ENCODE measurements at regions of chr19 and their contacts with region 1.

Region 1: GRCh38 chr19:6279931-6280591 is at the start of gene MLLT1:
- DNase-seq: peak; percentile 88 to 98 (median 93)
- ATAC-seq: peak; percentile 85
- H3K4me3 ChIP-seq: peak within 1 kb of the TSS; percentile 60 to 61
- H3K4me3 Mint-ChIP-seq: peak within 1 kb of the TSS; percentile 88
- H3K27ac ChIP-seq: peak within 1 kb of the TSS; percentile 50 to 77
- H3K27ac Mint-ChIP-seq: peak within 1 kb of the TSS; percentile 93
- H3K4me1 ChIP-seq: peaks cover 26% of the 10 kb centered on the region
- H3K4me1 Mint-ChIP-seq: peaks cover 44% of the 10 kb centered on the region
- H3K27me3 ChIP-seq: no peaks in the 10 kb centered on the region
- H3K27me3 Mint-ChIP-seq: no peaks in the 10 kb centered on the region
- CTCF ChIP-seq: peak; percentile 85
- total RNA-seq, gene MLLT1: 11.8 to 15.0 TPM

Region 2: GRCh38 chr19:5967994-5968430 is 312.0 kb before region 1 on chr19:
- CTCF ChIA-PET with region 1: no interaction called
- POLR2A ChIA-PET with region 1: no interaction called
- intact Hi-C with region 1: no loop called
- DNase-seq: peak in 8 of 9 experiments; percentile 46 to 81 (median 68)
- ATAC-seq: peak; percentile 81
- H3K4me3 ChIP-seq: no peak overlapping the region
- H3K4me3 Mint-ChIP-seq: peak overlapping the region; percentile 50
- H3K27ac ChIP-seq: no peak overlapping the region
- H3K27ac Mint-ChIP-seq: peak overlapping the region; percentile 83
- H3K4me1 ChIP-seq: peaks cover 89% of the 10 kb centered on the region
- H3K4me1 Mint-ChIP-seq: peaks cover 86% of the 10 kb centered on the region
- H3K27me3 ChIP-seq: no peaks in the 10 kb centered on the region
- H3K27me3 Mint-ChIP-seq: no peaks in the 10 kb centered on the region
- CTCF ChIP-seq: peak; percentile 94

Region 3: DNA sequence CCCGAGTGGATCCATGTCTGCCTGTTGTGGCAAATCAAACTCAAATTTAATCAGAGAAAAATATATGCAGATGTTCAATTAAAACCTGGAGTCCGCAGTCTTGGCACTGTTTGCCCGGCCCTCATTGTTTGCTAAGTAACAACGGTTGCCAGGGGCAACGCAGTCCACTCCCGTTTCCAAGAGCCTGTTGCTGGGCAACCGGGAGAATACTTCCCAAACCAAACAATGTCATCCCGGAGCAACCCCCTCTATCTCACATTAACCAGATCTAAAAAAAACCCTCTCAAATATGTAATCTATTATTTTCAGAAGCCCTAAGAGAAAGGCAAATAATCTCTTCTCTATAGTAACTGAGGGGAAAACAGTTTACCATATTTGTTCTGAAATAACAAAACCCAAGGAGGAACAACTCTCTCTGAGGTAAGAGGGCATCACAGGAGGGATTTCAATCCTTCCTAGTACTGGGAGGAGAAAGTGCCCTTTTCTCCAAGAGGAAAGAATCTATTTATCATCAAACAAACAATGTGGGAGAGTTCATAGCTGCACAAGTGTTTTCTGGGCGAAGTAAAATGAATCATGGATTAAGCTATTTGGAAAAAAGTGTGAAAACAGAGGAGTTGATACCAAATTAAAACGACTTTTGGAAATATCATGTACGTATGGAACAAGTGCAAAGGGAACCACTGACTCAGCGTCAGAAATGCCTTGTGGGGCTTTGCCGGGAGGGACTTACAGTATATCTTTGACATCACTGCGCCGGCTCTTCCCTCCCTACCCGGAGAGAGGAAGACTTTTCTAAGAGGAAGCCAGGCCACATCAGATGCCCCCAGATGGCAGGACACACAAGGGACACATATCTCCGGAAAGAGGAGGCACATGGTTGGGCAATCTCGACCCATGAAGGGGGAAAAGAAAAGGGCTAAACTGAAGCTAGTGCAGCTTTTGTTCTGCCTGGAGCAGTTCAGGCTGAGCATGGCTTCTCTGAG is 213.1 kb before region 1 on chr19:
- CTCF ChIA-PET with region 1: no interaction called
- POLR2A ChIA-PET with region 1: no interaction called
- intact Hi-C with region 1: no loop called
- DNase-seq: peak in 4 of 9 experiments; percentile 29 to 62 (median 45)
- ATAC-seq: no peak
- H3K4me3 ChIP-seq: no peak overlapping the region
- H3K4me3 Mint-ChIP-seq: no peak overlapping the region
- H3K27ac ChIP-seq: no peak overlapping the region
- H3K27ac Mint-ChIP-seq: peak overlapping the region; percentile 33
- H3K4me1 ChIP-seq: peaks cover 20% of the 10 kb centered on the region
- H3K4me1 Mint-ChIP-seq: peaks cover 36% of the 10 kb centered on the region
- H3K27me3 ChIP-seq: no peaks in the 10 kb centered on the region
- H3K27me3 Mint-ChIP-seq: no peaks in the 10 kb centered on the region
- CTCF ChIP-seq: no peak

Region 4: DNA sequence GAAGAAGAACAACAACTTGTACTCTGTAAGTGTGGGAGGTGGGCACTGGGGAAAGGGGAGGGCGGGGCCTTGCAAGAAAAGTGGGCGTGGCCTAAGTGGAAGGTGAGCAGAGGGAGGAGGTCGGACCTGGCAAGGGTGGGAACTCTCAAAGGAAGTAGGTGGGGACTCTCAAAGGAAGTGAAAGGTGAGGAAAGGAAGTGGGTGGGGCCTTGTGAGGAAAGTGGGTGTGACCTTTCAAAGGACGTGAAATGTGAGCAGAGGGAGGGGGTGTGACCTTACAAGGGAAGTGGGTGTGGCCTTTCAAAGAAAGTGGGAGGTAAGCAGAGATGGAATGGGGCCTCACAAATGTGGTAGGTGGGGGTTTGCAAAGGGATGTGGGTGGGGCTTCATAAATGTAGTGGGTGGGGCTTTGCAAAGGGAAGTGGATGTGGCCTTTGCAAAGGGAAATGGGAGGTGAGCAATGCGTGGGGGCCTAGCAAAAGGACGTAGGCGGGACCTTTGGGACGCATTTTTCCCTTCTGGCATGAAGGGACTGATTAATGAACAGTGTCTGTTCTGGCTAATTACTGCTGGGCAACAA is 118.7 kb before region 1 on chr19:
- CTCF ChIA-PET with region 1: no interaction called
- POLR2A ChIA-PET with region 1: no interaction called
- intact Hi-C with region 1: loop called in 1 of 2 experiments (anchors 10 kb)
- DNase-seq: peak in 7 of 9 experiments; percentile 3 to 95 (median 42)
- ATAC-seq: peak; percentile 91
- H3K4me3 ChIP-seq: no peak overlapping the region
- H3K4me3 Mint-ChIP-seq: peak overlapping the region; percentile 13
- H3K27ac ChIP-seq: peak overlapping the region; percentile 6 to 53
- H3K27ac Mint-ChIP-seq: peak overlapping the region; percentile 79
- H3K4me1 ChIP-seq: peaks cover 18% of the 10 kb centered on the region
- H3K4me1 Mint-ChIP-seq: peaks cover 13% of the 10 kb centered on the region
- H3K27me3 ChIP-seq: no peaks in the 10 kb centered on the region
- H3K27me3 Mint-ChIP-seq: no peaks in the 10 kb centered on the region
- CTCF ChIP-seq: no peak

Region 5: GRCh38 chr19:6297202-6297601 is 17.1 kb after region 1 on chr19:
- CTCF ChIA-PET with region 1: interaction called, 6 read pairs
- POLR2A ChIA-PET with region 1: no interaction called
- intact Hi-C with region 1: loop called in 1 of 2 experiments (anchors 1 kb)
- DNase-seq: no peak
- ATAC-seq: no peak
- H3K4me3 ChIP-seq: no peak overlapping the region
- H3K4me3 Mint-ChIP-seq: no peak overlapping the region
- H3K27ac ChIP-seq: no peak overlapping the region
- H3K27ac Mint-ChIP-seq: no peak overlapping the region
- H3K4me1 ChIP-seq: no peaks in the 10 kb centered on the region
- H3K4me1 Mint-ChIP-seq: peaks cover 3% of the 10 kb centered on the region
- H3K27me3 ChIP-seq: peaks cover 0 to 2% of the 10 kb centered on the region in 2 experiments
- H3K27me3 Mint-ChIP-seq: peaks cover 2% of the 10 kb centered on the region
- CTCF ChIP-seq: no peak

Region 6: GRCh38 chr19:6393074-6393983 is 113.3 kb after region 1 on chr19 and contains the start of gene GTF2F1:
- CTCF ChIA-PET with region 1: interaction called, 3 read pairs
- POLR2A ChIA-PET with region 1: no interaction called
- intact Hi-C with region 1: loop called in 1 of 2 experiments (anchors 10 kb)
- DNase-seq: peak; percentile 89 to 98 (median 95)
- ATAC-seq: peak; percentile 84
- H3K4me3 ChIP-seq: peak within 1 kb of the TSS; percentile 89 to 97
- H3K4me3 Mint-ChIP-seq: peak within 1 kb of the TSS; percentile 88
- H3K27ac ChIP-seq: peak within 1 kb of the TSS; percentile 98 to 100
- H3K27ac Mint-ChIP-seq: peak within 1 kb of the TSS; percentile 98
- H3K4me1 ChIP-seq: peaks cover 16% of the 10 kb centered on the region
- H3K4me1 Mint-ChIP-seq: peaks cover 25% of the 10 kb centered on the region
- H3K27me3 ChIP-seq: no peaks in the 10 kb centered on the region
- H3K27me3 Mint-ChIP-seq: no peaks in the 10 kb centered on the region
- CTCF ChIP-seq: no peak
- total RNA-seq, gene GTF2F1: 65.2 to 67.9 TPM

Region 7: DNA sequence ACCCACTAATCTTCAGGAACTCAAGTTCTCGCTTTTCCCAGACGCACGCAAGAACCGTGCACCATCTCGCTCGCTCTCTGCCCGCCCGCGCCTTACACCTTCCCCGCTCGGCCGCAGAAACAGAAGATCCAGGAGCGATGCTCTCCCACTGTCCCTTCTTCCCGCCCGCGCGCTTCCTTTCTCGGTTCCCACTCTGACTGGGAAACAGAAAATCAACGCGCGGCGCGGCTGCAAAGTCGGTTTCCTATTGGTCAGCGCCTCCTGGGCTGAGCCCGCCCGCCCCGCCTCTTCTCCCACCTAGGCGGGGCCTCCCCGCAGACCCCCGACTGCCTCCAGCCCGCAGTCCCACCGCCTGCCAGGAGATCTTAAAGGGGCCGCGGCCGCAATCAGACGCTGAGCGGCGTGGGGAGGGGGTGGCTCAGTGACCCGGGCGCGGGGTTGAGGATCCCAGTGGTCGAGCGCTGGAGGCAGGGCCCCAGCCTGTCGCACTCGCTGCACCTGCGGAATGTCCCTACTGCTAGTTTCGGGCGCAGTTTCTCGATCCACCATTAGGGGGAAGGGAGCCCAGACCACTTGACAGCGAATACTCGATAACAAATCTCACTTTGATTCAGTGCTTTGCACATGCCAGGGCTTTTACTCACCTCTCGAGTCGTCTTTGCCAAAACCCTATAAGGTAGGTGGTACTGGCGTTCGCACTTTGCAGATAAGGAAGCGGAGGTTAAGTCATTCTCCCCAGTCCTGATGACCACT is 180.2 kb after region 1 on chr19:
- CTCF ChIA-PET with region 1: no interaction called
- POLR2A ChIA-PET with region 1: no interaction called
- intact Hi-C with region 1: loop called in 1 of 2 experiments (anchors 2 kb)
- DNase-seq: peak; percentile 93 to 98 (median 96)
- ATAC-seq: peak; percentile 85
- H3K4me3 ChIP-seq: peak overlapping the region; percentile 73 to 87
- H3K4me3 Mint-ChIP-seq: peak overlapping the region; percentile 94
- H3K27ac ChIP-seq: peak overlapping the region; percentile 62 to 69
- H3K27ac Mint-ChIP-seq: peak overlapping the region; percentile 81
- H3K4me1 ChIP-seq: peaks cover 20% of the 10 kb centered on the region
- H3K4me1 Mint-ChIP-seq: peaks cover 32% of the 10 kb centered on the region
- H3K27me3 ChIP-seq: peaks cover 0 to 3% of the 10 kb centered on the region in 2 experiments
- H3K27me3 Mint-ChIP-seq: no peaks in the 10 kb centered on the region
- CTCF ChIP-seq: peak; percentile 54

Measured in CD8-positive, alpha-beta T cell (primary cell).